Naive thymus-derived CD4-positive, alpha-beta T cell (primary cell): ENCODE measurements at regions of chr7 and their contacts with region 1.

Region 1: GRCh38 chr7:155003376-155004214 is 671 bp upstream of the PAXIP1 start:
- DNase-seq: peak in 8 of 9 donors; percentile 74 to 93 (median 86)
- ATAC-seq: peak; percentile 93
- H3K4me3 ChIP-seq: peak overlapping the region; percentile 68
- H3K4me3 Mint-ChIP-seq: peak overlapping the region; percentile 91 to 98 (median 94)
- H3K27ac ChIP-seq: peak overlapping the region; percentile 93
- H3K27ac Mint-ChIP-seq: peak overlapping the region; percentile 89 to 96 (median 94)
- H3K4me1 ChIP-seq: peaks cover 0 to 6% of the 10 kb centered on the region in 2 donors
- H3K4me1 Mint-ChIP-seq: peaks cover 12 to 25% (median 16%) of the 10 kb centered on the region in 7 donors
- H3K27me3 ChIP-seq: no peaks in the 10 kb centered on the region
- H3K27me3 Mint-ChIP-seq: no peaks in the 10 kb centered on the region

Region 2: DNA sequence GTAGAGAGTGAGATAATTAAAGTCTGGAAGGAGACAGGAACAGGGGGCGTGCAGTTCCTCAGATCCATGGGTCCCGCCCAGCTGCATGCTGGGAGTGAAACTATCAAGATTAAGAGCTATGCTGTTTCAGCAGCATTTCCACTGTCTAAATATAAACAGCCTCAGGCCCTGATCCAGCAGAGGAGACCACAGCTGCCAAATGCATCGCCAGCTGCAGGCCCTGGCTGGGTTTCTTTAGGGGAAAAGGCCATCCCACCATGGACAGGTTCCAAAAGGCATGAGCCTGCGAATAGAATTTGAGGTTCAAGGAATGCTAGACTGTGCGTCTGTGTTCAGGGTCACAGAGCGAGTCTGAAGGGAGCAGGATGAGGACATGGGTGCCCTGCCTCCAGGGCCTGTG is 412.1 kb before region 1 on chr7:
- CTCF ChIA-PET with region 1: no interaction called
- POLR2A ChIA-PET with region 1: no interaction called
- intact Hi-C with region 1: no loop called
- DNase-seq: no peak
- ATAC-seq: no peak
- H3K4me3 ChIP-seq: no peak overlapping the region
- H3K4me3 Mint-ChIP-seq: no peak overlapping the region
- H3K27ac ChIP-seq: no peak overlapping the region
- H3K27ac Mint-ChIP-seq: no peak overlapping the region
- H3K4me1 ChIP-seq: no peaks in the 10 kb centered on the region
- H3K4me1 Mint-ChIP-seq: no peaks in the 10 kb centered on the region
- H3K27me3 ChIP-seq: no peaks in the 10 kb centered on the region
- H3K27me3 Mint-ChIP-seq: peaks cover 0 to 11% (median 0%) of the 10 kb centered on the region in 5 donors

Region 3: GRCh38 chr7:154913638-154914312 is 89.8 kb before region 1 on chr7:
- CTCF ChIA-PET with region 1: interaction called, 6 read pairs
- POLR2A ChIA-PET with region 1: no interaction called
- intact Hi-C with region 1: loop called in 1 of 2 experiments (anchors 1 kb)
- DNase-seq: peak; percentile 71 to 89 (median 82)
- ATAC-seq: peak; percentile 96
- H3K4me3 ChIP-seq: peak overlapping the region; percentile 56
- H3K4me3 Mint-ChIP-seq: peak overlapping the region; percentile 76 to 95 (median 90)
- H3K27ac ChIP-seq: no peak overlapping the region
- H3K27ac Mint-ChIP-seq: peak overlapping the region in 8 of 9 donors; percentile 17 to 85 (median 66)
- H3K4me1 ChIP-seq: no peaks in the 10 kb centered on the region
- H3K4me1 Mint-ChIP-seq: peaks cover 3 to 7% (median 4%) of the 10 kb centered on the region in 7 donors
- H3K27me3 ChIP-seq: no peaks in the 10 kb centered on the region
- H3K27me3 Mint-ChIP-seq: peaks cover 4 to 25% (median 14%) of the 10 kb centered on the region in 5 donors

Region 4: GRCh38 chr7:154984601-154985188 is 18.9 kb before region 1 on chr7:
- CTCF ChIA-PET with region 1: interaction called, 3 read pairs
- POLR2A ChIA-PET with region 1: no interaction called
- intact Hi-C with region 1: loop called in 1 of 2 experiments (anchors 2 kb)
- DNase-seq: no peak
- ATAC-seq: no peak
- H3K4me3 ChIP-seq: no peak overlapping the region
- H3K4me3 Mint-ChIP-seq: no peak overlapping the region
- H3K27ac ChIP-seq: no peak overlapping the region
- H3K27ac Mint-ChIP-seq: no peak overlapping the region
- H3K4me1 ChIP-seq: no peaks in the 10 kb centered on the region
- H3K4me1 Mint-ChIP-seq: peaks cover 0 to 20% (median 6%) of the 10 kb centered on the region in 7 donors
- H3K27me3 ChIP-seq: no peaks in the 10 kb centered on the region
- H3K27me3 Mint-ChIP-seq: no peaks in the 10 kb centered on the region

Region 5: GRCh38 chr7:155069992-155070751 is 66.6 kb after region 1 on chr7 and contains the start of gene HTR5A:
- CTCF ChIA-PET with region 1: no interaction called
- POLR2A ChIA-PET with region 1: no interaction called
- intact Hi-C with region 1: loop called (anchors 1 kb)
- DNase-seq: peak; percentile 58 to 87 (median 78)
- ATAC-seq: peak; percentile 99
- H3K4me3 ChIP-seq: no peak within 1 kb of the TSS
- H3K4me3 Mint-ChIP-seq: no peak within 1 kb of the TSS
- H3K27ac ChIP-seq: no peak within 1 kb of the TSS
- H3K27ac Mint-ChIP-seq: peak within 1 kb of the TSS in 1 of 9 donors; percentile 19
- H3K4me1 ChIP-seq: no peaks in the 10 kb centered on the region
- H3K4me1 Mint-ChIP-seq: peaks cover 0 to 5% (median 0%) of the 10 kb centered on the region in 7 donors
- H3K27me3 ChIP-seq: peaks cover 0 to 15% of the 10 kb centered on the region in 2 donors
- H3K27me3 Mint-ChIP-seq: peaks cover 28 to 67% (median 52%) of the 10 kb centered on the region in 5 donors
- total RNA-seq, gene HTR5A: not detected

Region 6: GRCh38 chr7:155205368-155206317 is 202.0 kb after region 1 on chr7:
- CTCF ChIA-PET with region 1: no interaction called
- POLR2A ChIA-PET with region 1: interaction called, 9 read pairs
- intact Hi-C with region 1: loop called (anchors 1 kb)
- DNase-seq: peak; percentile 68 to 90 (median 79)
- ATAC-seq: peak; percentile 90
- H3K4me3 ChIP-seq: peak overlapping the region; percentile 52
- H3K4me3 Mint-ChIP-seq: peak overlapping the region; percentile 70 to 94 (median 86)
- H3K27ac ChIP-seq: peak overlapping the region; percentile 8
- H3K27ac Mint-ChIP-seq: peak overlapping the region; percentile 56 to 99 (median 86)
- H3K4me1 ChIP-seq: peaks cover 8 to 11% of the 10 kb centered on the region in 2 donors
- H3K4me1 Mint-ChIP-seq: peaks cover 19 to 30% (median 21%) of the 10 kb centered on the region in 7 donors
- H3K27me3 ChIP-seq: no peaks in the 10 kb centered on the region
- H3K27me3 Mint-ChIP-seq: no peaks in the 10 kb centered on the region

Region 7: DNA sequence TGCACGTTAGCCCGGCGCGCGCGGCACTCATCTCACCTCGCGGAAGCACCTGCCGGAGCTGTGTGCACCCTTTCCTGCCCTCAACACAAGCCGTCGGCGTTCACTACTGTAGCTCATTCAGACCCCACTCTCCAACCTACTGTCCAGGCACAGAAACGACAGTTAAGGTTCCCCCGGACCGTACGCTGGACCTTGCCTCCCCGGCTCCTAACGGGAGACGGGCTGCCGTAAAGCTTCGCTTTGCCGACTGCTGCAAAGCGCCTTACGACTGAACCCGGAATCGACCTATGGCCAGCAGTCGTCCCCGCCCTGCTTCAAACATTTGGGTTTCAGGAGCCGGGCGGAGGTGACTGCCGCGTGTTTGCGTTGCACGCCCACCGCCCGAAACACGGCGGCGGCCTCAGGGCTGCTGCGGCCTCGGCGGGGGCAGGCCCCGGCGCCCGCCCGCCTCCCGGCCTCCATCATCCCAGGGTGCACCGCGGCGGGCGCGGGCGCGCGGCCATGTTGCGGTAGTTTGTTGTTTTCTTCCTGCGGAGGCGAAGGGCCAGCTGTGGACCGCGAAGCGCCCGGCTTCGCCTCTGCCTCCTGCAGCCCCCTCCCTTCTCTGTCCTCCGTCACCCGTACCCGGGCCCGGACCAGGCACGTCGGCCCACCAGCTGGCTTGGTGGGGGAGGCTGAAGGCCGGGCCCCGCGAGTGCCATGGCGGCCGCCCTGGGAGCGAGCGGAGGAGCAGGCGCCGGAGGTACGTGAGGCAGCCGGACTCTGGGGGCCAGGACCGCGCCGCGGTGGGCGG is 640.8 kb after region 1 on chr7 and contains the start of gene RBM33:
- CTCF ChIA-PET with region 1: no interaction called
- POLR2A ChIA-PET with region 1: no interaction called
- intact Hi-C with region 1: loop called in 1 of 2 experiments (anchors 5 kb)
- DNase-seq: peak; percentile 74 to 91 (median 84)
- ATAC-seq: peak; percentile 90
- H3K4me3 ChIP-seq: peak within 1 kb of the TSS; percentile 99
- H3K4me3 Mint-ChIP-seq: peak within 1 kb of the TSS; percentile 94 to 100 (median 99)
- H3K27ac ChIP-seq: peak within 1 kb of the TSS; percentile 98
- H3K27ac Mint-ChIP-seq: peak within 1 kb of the TSS; percentile 94 to 100 (median 99)
- H3K4me1 ChIP-seq: peaks cover 22 to 27% of the 10 kb centered on the region in 2 donors
- H3K4me1 Mint-ChIP-seq: peaks cover 30 to 58% (median 49%) of the 10 kb centered on the region in 7 donors
- H3K27me3 ChIP-seq: no peaks in the 10 kb centered on the region
- H3K27me3 Mint-ChIP-seq: peaks cover 0 to 2% (median 0%) of the 10 kb centered on the region in 5 donors
- total RNA-seq, gene RBM33: 90.2 to 177 (median 164) TPM

Region 8: GRCh38 chr7:155763691-155764437 is 760.3 kb after region 1 on chr7:
- CTCF ChIA-PET with region 1: no interaction called
- POLR2A ChIA-PET with region 1: no interaction called
- intact Hi-C with region 1: loop called in 1 of 2 experiments (anchors 5 kb)
- DNase-seq: peak in 8 of 9 donors; percentile 48 to 73 (median 60)
- ATAC-seq: peak; percentile 80
- H3K4me3 ChIP-seq: peak overlapping the region; percentile 12
- H3K4me3 Mint-ChIP-seq: peak overlapping the region; percentile 64 to 91 (median 80)
- H3K27ac ChIP-seq: peak overlapping the region; percentile 67
- H3K27ac Mint-ChIP-seq: peak overlapping the region; percentile 73 to 98 (median 91)
- H3K4me1 ChIP-seq: peaks cover 24 to 31% of the 10 kb centered on the region in 2 donors
- H3K4me1 Mint-ChIP-seq: peaks cover 39 to 67% (median 61%) of the 10 kb centered on the region in 7 donors
- H3K27me3 ChIP-seq: no peaks in the 10 kb centered on the region
- H3K27me3 Mint-ChIP-seq: no peaks in the 10 kb centered on the region